A673 (cell line): ENCODE measurements at regions of chr7 and their contacts with region 1.

Region 1: GRCh38 chr7:105759670-105760550 is 116.5 kb downstream of the ATXN7L1 start:
- DNase-seq: peak; percentile 86
- H3K4me3 ChIP-seq: no peak overlapping the region
- H3K27ac ChIP-seq: peak overlapping the region; percentile 67
- H3K4me1 ChIP-seq: peaks cover 70% of the 10 kb centered on the region
- H3K27me3 ChIP-seq: no peaks in the 10 kb centered on the region
- CTCF ChIP-seq: peak; percentile 81

Region 2: GRCh38 chr7:104231054-104232046 is 1528.6 kb before region 1 on chr7:
- CTCF ChIA-PET with region 1: no interaction called
- POLR2A ChIA-PET with region 1: no interaction called
- intact Hi-C with region 1: no loop called
- DNase-seq: peak; percentile 63
- H3K4me3 ChIP-seq: no peak overlapping the region
- H3K27ac ChIP-seq: no peak overlapping the region
- H3K4me1 ChIP-seq: no peaks in the 10 kb centered on the region
- H3K27me3 ChIP-seq: peaks cover 24% of the 10 kb centered on the region
- CTCF ChIP-seq: peak; percentile 85

Region 3: DNA sequence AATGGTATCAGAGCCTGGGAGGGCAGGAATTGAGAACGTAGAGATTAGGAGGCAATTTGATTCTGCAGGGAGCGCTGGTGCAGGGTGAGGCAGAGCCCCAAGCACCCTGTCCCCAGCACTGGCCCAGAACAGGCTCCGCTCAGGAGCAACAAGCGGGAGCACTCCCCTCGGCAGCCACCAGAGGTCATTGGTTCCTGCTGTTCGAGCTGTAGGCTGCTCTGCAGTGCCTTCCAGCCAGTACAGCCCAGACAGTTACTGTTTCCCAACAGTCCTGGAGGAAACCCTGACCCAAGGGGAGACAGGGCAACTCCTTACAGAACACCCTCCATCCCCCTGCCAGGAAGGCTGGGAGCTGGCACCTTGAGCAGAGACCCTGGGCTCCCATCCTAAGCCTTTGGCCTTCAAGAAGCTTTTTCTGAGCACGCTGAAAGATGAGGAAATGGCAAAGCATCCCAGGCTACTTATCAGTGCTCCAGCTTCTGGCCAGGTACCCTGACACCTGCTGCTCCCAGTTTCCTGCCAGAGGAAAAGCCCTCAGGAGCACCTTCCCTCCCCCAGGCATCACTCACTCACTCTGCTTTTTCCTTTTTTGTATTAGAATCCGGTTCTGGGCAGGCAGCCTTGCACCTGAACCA is 107.4 kb before region 1 on chr7:
- CTCF ChIA-PET with region 1: interaction called, 3 read pairs
- POLR2A ChIA-PET with region 1: no interaction called
- intact Hi-C with region 1: loop called (anchors 5 kb)
- DNase-seq: peak; percentile 86
- H3K4me3 ChIP-seq: no peak overlapping the region
- H3K27ac ChIP-seq: peak overlapping the region; percentile 7
- H3K4me1 ChIP-seq: peaks cover 82% of the 10 kb centered on the region
- H3K27me3 ChIP-seq: no peaks in the 10 kb centered on the region
- CTCF ChIP-seq: peak; percentile 90

Region 4: DNA sequence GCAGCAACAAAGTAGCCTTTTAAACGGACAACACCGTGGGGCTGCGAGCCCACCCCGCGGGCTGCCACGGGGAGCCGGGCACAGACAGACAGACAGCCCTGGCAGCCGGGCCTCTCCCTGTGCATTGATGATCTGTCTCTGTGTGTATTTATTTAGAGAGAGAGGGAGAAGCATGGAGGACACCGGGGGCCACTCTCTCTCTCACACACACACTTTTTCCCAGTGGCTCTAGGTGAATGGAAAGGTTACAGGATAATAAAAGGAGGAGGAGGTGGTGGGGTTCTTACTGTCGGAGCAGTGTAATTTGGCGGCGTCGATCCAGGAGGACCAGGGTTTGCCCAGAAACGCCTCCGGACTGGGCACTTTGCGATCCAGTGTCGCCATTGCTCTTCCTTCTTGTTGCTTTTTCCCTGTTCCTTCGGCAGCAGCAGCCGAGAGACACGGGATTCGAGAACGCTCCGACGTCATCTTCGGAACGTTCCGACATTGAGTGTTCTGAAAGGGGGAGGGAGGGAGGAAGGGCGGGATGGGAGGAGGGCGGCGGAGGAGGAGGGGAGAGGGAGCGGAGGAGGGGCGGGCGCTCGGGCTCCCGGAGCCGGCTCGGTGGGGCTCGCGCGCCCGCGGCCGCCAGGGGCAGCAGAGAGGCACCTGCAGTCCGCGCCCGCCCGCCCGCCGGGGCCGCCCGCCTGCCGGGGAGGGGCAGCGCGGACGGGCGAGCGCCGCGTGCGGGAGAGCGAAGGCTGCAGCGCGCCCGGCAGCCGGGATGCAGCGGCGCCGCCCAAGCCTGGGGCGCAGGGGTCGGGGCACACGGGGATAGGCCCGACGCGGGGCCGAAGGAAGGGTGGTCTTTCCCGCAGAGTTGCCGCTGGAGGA is 116.4 kb after region 1 on chr7 and contains the start of gene ATXN7L1:
- CTCF ChIA-PET with region 1: no interaction called
- POLR2A ChIA-PET with region 1: no interaction called
- intact Hi-C with region 1: loop called (anchors 5 kb)
- DNase-seq: peak; percentile 99
- H3K4me3 ChIP-seq: peak within 1 kb of the TSS; percentile 77
- H3K27ac ChIP-seq: peak within 1 kb of the TSS; percentile 93
- H3K4me1 ChIP-seq: no peaks in the 10 kb centered on the region
- H3K27me3 ChIP-seq: no peaks in the 10 kb centered on the region
- CTCF ChIP-seq: peak; percentile 40; the same call in 1 of the 2 replicates
- total RNA-seq, gene ATXN7L1: 29.9 and 32.8 TPM in 2 replicates

Region 5: GRCh38 chr7:105952917-105953595 is 193.1 kb after region 1 on chr7:
- CTCF ChIA-PET with region 1: no interaction called
- POLR2A ChIA-PET with region 1: no interaction called
- intact Hi-C with region 1: no loop called
- DNase-seq: no peak
- H3K4me3 ChIP-seq: no peak overlapping the region
- H3K27ac ChIP-seq: no peak overlapping the region
- H3K4me1 ChIP-seq: no peaks in the 10 kb centered on the region
- H3K27me3 ChIP-seq: no peaks in the 10 kb centered on the region
- CTCF ChIP-seq: no peak

Region 6: GRCh38 chr7:106009403-106010226 is 249.7 kb after region 1 on chr7:
- CTCF ChIA-PET with region 1: interaction called, 5 read pairs
- POLR2A ChIA-PET with region 1: no interaction called
- intact Hi-C with region 1: loop called (anchors 10 kb)
- DNase-seq: peak; percentile 92
- H3K4me3 ChIP-seq: no peak overlapping the region
- H3K27ac ChIP-seq: peak overlapping the region; percentile 63
- H3K4me1 ChIP-seq: peaks cover 16% of the 10 kb centered on the region
- H3K27me3 ChIP-seq: no peaks in the 10 kb centered on the region
- CTCF ChIP-seq: peak; percentile 99

Region 7: GRCh38 chr7:106153891-106154449 is 394.1 kb after region 1 on chr7:
- CTCF ChIA-PET with region 1: no interaction called
- POLR2A ChIA-PET with region 1: no interaction called
- intact Hi-C with region 1: loop called (anchors 5 kb)
- DNase-seq: peak; percentile 90
- H3K4me3 ChIP-seq: no peak overlapping the region
- H3K27ac ChIP-seq: no peak overlapping the region
- H3K4me1 ChIP-seq: no peaks in the 10 kb centered on the region
- H3K27me3 ChIP-seq: no peaks in the 10 kb centered on the region
- CTCF ChIP-seq: peak; percentile 96